ENCODE measurements at regions of chr17 and their contacts with region 1.

Region 1: GRCh38 chr17:80008383-80008840 is 27.3 kb downstream of the TBC1D16 start:
- DNase-seq: peak; percentile 78 to 80
- H3K4me3 ChIP-seq: no peak overlapping the region
- H3K27ac ChIP-seq: no peak overlapping the region
- H3K4me1 ChIP-seq: no peaks in the 10 kb centered on the region
- H3K27me3 ChIP-seq: no peaks in the 10 kb centered on the region
- CTCF ChIP-seq: peak; percentile 88 to 94 (median 92)
- POLR2A ChIP-seq: no peak

Region 2: GRCh38 chr17:80063830-80064585 is 55.6 kb after region 1 on chr17:
- intact Hi-C with region 1: loop called (anchors 10 kb)
- DNase-seq: peak; percentile 64 to 71
- H3K4me3 ChIP-seq: no peak overlapping the region
- H3K27ac ChIP-seq: peak overlapping the region; percentile 43 to 51
- H3K4me1 ChIP-seq: peaks cover 0 to 3% of the 10 kb centered on the region in 2 donors
- H3K27me3 ChIP-seq: no peaks in the 10 kb centered on the region
- CTCF ChIP-seq: no peak
- POLR2A ChIP-seq: no peak

Measured in uterus (tissue), 4 donors.